ENCODE measurements at regions of chr5 and their contacts with region 1.

Region 1: GRCh38 chr5:151740336-151740942 is 18.0 kb downstream of the ATOX1 start:
- DNase-seq: peak; percentile 70
- H3K4me3 ChIP-seq: no peak overlapping the region
- H3K27ac ChIP-seq: no peak overlapping the region
- H3K4me1 ChIP-seq: no peaks in the 10 kb centered on the region
- CTCF ChIP-seq: peak; percentile 96

Region 2: GRCh38 chr5:151577559-151577958 is 162.9 kb before region 1 on chr5:
- CTCF ChIA-PET with region 1: no interaction called
- POLR2A ChIA-PET with region 1: no interaction called
- intact Hi-C with region 1: no loop called
- DNase-seq: no peak
- H3K4me3 ChIP-seq: no peak overlapping the region
- H3K27ac ChIP-seq: no peak overlapping the region
- H3K4me1 ChIP-seq: no peaks in the 10 kb centered on the region
- CTCF ChIP-seq: no peak

Region 3: GRCh38 chr5:151651997-151652645 is 88.3 kb before region 1 on chr5:
- CTCF ChIA-PET with region 1: interaction called, 11 read pairs
- POLR2A ChIA-PET with region 1: no interaction called
- intact Hi-C with region 1: no loop called
- DNase-seq: peak; percentile 73
- H3K4me3 ChIP-seq: no peak overlapping the region
- H3K27ac ChIP-seq: no peak overlapping the region
- H3K4me1 ChIP-seq: no peaks in the 10 kb centered on the region
- CTCF ChIP-seq: peak; percentile 87

Region 4: DNA sequence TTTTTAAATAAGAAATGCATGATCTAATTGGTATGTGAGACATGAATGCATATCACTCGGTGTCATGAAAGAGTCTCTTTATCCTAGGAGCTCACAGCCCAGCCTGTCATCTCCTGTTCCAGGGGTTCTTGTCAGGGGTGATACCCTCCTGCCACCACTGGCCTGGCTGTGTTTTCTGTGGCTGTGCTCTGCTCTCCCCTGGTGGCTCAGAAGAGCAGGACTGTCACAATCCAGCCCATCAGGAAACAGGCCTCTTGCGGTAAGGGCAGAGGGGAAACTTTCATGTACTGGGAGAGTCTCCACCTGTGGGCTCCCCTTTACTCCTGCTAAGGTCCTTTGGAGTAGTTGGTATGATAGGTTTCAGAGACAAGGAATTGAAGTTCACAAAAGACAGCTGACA is 424.4 kb after region 1 on chr5:
- CTCF ChIA-PET with region 1: no interaction called
- POLR2A ChIA-PET with region 1: no interaction called
- intact Hi-C with region 1: no loop called
- DNase-seq: no peak
- H3K4me3 ChIP-seq: no peak overlapping the region
- H3K27ac ChIP-seq: no peak overlapping the region
- H3K4me1 ChIP-seq: no peaks in the 10 kb centered on the region
- CTCF ChIP-seq: no peak